CD4-positive, alpha-beta T cell (primary cell): ENCODE measurements at regions of chr11 and their contacts with region 1.

Region 1: GRCh38 chr11:46889689-46890475 is 28.5 kb downstream of the LRP4 start:
- DNase-seq: peak; percentile 47 to 86 (median 68)
- ATAC-seq: peak; percentile 96
- H3K4me3 ChIP-seq: no peak overlapping the region
- H3K4me3 Mint-ChIP-seq: no peak overlapping the region
- H3K27ac ChIP-seq: no peak overlapping the region
- H3K27ac Mint-ChIP-seq: no peak overlapping the region
- H3K4me1 ChIP-seq: no peaks in the 10 kb centered on the region
- H3K4me1 Mint-ChIP-seq: no peaks in the 10 kb centered on the region
- H3K27me3 ChIP-seq: peaks cover 0 to 4% of the 10 kb centered on the region in 2 experiments
- H3K27me3 Mint-ChIP-seq: peaks cover 13% of the 10 kb centered on the region
- CTCF ChIP-seq: peak; percentile 80

Region 2: GRCh38 chr11:46936138-46937110 is 46.5 kb after region 1 on chr11 and contains the start of gene CSTPP1:
- CTCF ChIA-PET with region 1: no interaction called
- POLR2A ChIA-PET with region 1: no interaction called
- intact Hi-C with region 1: no loop called
- DNase-seq: peak; percentile 87 to 95 (median 92)
- ATAC-seq: peak; percentile 96
- H3K4me3 ChIP-seq: peak within 1 kb of the TSS; percentile 73
- H3K4me3 Mint-ChIP-seq: peak within 1 kb of the TSS; percentile 91
- H3K27ac ChIP-seq: peak within 1 kb of the TSS; percentile 28 to 39
- H3K27ac Mint-ChIP-seq: peak within 1 kb of the TSS; percentile 83
- H3K4me1 ChIP-seq: peaks cover 18% of the 10 kb centered on the region
- H3K4me1 Mint-ChIP-seq: peaks cover 22% of the 10 kb centered on the region
- H3K27me3 ChIP-seq: peaks cover 0 to 3% of the 10 kb centered on the region in 2 experiments
- H3K27me3 Mint-ChIP-seq: peaks cover 8% of the 10 kb centered on the region
- CTCF ChIP-seq: no peak
- total RNA-seq, gene CSTPP1: 6.6 to 7.3 TPM

Region 3: DNA sequence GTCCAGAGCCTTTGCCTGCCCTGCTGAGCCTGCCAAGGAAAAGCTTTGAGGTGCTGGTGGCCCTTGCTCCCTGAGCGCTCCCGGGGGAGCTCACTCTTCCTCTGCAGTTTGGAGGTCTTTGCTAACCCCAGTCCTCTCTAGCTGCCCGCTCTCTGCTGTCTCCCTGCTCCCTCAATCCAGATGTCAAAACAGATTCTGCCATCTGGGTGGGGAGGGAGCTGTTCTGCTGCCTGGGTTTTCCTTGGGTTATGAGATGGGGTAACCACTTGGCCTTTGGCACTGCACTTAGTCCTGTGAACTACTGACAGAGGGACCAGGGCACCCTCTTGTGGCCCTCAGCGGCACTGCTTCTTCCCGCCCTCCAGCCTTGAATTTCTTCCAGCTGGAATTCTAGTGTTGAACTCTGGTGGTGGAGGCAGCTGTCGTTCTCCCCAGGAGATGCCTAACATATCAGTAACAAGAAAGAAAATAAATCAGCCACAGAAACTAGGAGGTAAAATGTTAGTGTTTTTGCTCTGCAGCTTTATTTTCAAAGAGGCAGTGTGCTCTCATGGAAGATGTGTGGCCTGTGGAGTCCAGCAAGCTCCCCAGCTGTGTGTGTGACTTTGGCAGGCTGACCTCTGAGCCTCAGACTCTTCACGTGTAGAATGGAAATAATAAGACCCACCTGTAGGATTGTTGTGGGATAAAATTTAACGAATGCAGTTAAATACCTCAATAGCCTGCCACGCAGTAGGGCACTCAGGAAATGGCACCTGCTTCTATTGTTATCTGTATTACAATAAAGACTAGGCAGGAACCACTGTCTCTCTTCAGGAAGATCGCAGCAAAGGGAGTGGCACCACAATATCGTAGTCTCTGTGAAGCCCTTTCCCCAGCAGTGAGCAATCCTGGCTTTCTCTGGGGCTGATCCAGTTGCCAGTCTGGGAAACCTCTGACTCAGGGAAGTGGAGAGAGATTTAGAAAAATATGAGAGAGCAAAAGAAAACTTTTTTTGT is 263.4 kb after region 1 on chr11:
- CTCF ChIA-PET with region 1: interaction called, 9 read pairs
- POLR2A ChIA-PET with region 1: no interaction called
- intact Hi-C with region 1: loop called (anchors 1 kb)
- DNase-seq: peak; percentile 29 to 72 (median 42)
- ATAC-seq: peak; percentile 63
- H3K4me3 ChIP-seq: no peak overlapping the region
- H3K4me3 Mint-ChIP-seq: peak overlapping the region; percentile 74
- H3K27ac ChIP-seq: peak overlapping the region in 1 of 2 donors; percentile 27
- H3K27ac Mint-ChIP-seq: peak overlapping the region; percentile 86
- H3K4me1 ChIP-seq: peaks cover 37% of the 10 kb centered on the region
- H3K4me1 Mint-ChIP-seq: peaks cover 33% of the 10 kb centered on the region
- H3K27me3 ChIP-seq: no peaks in the 10 kb centered on the region
- H3K27me3 Mint-ChIP-seq: no peaks in the 10 kb centered on the region
- CTCF ChIP-seq: peak; percentile 94

Region 4: DNA sequence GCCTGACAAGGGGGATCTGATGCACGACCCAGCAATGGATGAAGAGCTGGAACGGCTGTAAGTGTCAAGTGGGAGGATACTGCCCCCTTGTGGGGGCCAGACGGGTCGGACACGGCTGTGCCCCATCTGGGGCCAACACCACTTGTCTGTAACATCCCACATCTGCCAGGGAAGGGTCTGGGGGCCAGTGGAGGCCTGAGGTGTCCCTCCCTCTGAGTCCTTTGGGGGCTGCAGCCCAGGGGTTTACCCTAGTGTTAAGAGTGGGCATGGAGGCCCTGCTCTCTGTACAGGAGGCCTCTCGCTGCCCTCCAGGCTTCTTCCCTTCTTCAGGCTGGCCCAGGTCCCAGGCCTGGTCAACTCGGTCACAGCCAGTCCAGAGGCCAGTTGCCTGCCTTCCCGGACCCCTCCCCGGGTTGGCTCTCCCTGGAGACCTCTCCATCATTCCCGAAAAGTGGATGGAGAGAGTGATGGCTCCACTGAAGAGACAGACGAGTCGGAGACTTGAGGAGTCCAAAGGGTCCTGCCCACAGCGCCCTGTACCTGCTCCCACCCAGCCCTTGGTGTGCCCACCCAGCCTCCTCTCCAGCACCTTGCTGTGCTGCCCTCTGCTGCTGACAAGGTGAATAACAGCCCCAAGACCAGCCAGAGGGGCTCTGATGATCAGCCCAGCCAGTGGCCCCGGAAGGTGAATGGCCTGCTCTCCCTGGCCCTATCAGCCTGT is 271.4 kb after region 1 on chr11:
- CTCF ChIA-PET with region 1: interaction called, 4 read pairs
- POLR2A ChIA-PET with region 1: interaction called, 3 read pairs
- intact Hi-C with region 1: loop called (anchors 1 kb)
- DNase-seq: peak; percentile 40 to 79 (median 54)
- ATAC-seq: peak; percentile 71
- H3K4me3 ChIP-seq: no peak overlapping the region
- H3K4me3 Mint-ChIP-seq: no peak overlapping the region
- H3K27ac ChIP-seq: no peak overlapping the region
- H3K27ac Mint-ChIP-seq: peak overlapping the region; percentile 53
- H3K4me1 ChIP-seq: peaks cover 7% of the 10 kb centered on the region
- H3K4me1 Mint-ChIP-seq: no peaks in the 10 kb centered on the region
- H3K27me3 ChIP-seq: no peaks in the 10 kb centered on the region
- H3K27me3 Mint-ChIP-seq: no peaks in the 10 kb centered on the region
- CTCF ChIP-seq: peak; percentile 55

Region 5: GRCh38 chr11:47454180-47454644 is 564.3 kb after region 1 on chr11:
- CTCF ChIA-PET with region 1: no interaction called
- POLR2A ChIA-PET with region 1: no interaction called
- intact Hi-C with region 1: loop called (anchors 2 to 5 kb)
- DNase-seq: peak; percentile 30 to 87 (median 55)
- ATAC-seq: peak; percentile 99
- H3K4me3 ChIP-seq: no peak overlapping the region
- H3K4me3 Mint-ChIP-seq: no peak overlapping the region
- H3K27ac ChIP-seq: no peak overlapping the region
- H3K27ac Mint-ChIP-seq: no peak overlapping the region
- H3K4me1 ChIP-seq: peaks cover 4% of the 10 kb centered on the region
- H3K4me1 Mint-ChIP-seq: peaks cover 5% of the 10 kb centered on the region
- H3K27me3 ChIP-seq: no peaks in the 10 kb centered on the region
- H3K27me3 Mint-ChIP-seq: no peaks in the 10 kb centered on the region
- CTCF ChIP-seq: peak; percentile 64